Adrenal gland (tissue), 19 donors: ENCODE measurements at regions of chr11 and their contacts with region 1.

Region 1: DNA sequence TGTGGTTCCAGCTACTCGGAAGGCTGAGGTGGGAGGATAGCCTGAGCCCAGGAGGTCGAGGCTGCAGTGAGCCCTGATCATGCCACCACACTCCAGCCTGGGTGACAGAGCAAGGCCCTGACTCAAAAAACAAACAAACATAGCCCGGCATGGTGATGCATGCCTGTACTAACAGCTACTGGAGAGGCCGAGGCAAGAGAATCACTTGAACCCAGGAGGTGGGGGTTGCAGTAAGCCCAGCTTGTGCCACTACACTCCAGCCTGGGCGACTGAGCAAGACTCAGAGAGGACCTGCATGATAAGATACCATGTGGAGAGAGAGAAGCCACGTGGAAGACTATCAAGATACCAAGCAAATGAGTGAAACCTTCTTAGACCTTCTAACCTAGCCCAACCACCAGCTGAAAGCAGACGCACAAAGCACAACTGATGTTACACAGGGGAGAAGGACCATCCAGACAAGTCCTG is 36.1 kb downstream of the AMBRA1 start:
- DNase-seq: peak in 2 of 7 donors; percentile 11 to 24
- H3K4me3 ChIP-seq: no peak overlapping the region
- H3K27ac ChIP-seq: peak overlapping the region in 1 of 5 donors; percentile 23
- H3K4me1 ChIP-seq: peaks cover 39 to 65% of the 10 kb centered on the region in 2 donors
- H3K27me3 ChIP-seq: no peaks in the 10 kb centered on the region
- CTCF ChIP-seq: no peak
- POLR2A ChIP-seq: no peak

Region 2: DNA sequence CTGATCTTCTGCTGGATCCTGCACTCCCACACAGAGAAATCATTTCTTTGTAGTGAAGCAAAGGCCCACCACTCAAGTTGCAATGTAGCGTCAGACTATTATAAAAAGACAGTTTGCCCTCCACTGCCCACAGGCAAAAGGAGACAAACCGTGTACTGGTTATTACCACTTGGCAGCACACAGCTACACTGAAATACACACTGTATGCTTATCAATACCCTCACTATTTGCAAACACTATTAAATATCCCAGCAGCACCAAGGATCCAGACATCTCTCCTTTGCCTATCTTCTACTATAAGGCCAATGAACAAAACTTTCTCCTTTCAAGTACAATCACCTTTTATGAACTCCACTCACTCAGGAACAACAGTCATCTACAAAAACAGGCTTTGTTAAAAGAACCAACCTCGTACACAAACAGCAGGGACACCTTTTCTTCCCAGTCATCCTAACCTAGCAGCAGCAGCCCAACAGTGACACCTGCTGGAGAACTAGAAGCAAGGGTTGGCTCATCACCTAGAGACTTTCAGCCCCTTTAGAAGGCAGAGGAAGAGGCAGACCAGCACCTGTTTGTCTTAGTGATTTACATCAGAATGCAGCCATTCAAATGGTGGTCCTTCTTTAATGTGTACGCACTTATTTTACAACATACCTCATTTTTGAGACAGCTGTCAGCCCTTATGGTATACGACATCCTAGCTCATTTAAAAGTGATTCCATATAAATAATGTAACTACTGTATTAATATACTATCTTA is 20.0 kb before region 1 on chr11:
- intact Hi-C with region 1: loop called in 1 of 2 experiments (anchors 2 kb)
- DNase-seq: peak; percentile 65 to 82 (median 69)
- H3K4me3 ChIP-seq: no peak overlapping the region
- H3K27ac ChIP-seq: peak overlapping the region in 1 of 5 donors; percentile 18
- H3K4me1 ChIP-seq: peaks cover 16 to 38% of the 10 kb centered on the region in 2 donors
- H3K27me3 ChIP-seq: no peaks in the 10 kb centered on the region
- CTCF ChIP-seq: peak; percentile 81 to 91 (median 86)
- POLR2A ChIP-seq: no peak

Region 3: DNA sequence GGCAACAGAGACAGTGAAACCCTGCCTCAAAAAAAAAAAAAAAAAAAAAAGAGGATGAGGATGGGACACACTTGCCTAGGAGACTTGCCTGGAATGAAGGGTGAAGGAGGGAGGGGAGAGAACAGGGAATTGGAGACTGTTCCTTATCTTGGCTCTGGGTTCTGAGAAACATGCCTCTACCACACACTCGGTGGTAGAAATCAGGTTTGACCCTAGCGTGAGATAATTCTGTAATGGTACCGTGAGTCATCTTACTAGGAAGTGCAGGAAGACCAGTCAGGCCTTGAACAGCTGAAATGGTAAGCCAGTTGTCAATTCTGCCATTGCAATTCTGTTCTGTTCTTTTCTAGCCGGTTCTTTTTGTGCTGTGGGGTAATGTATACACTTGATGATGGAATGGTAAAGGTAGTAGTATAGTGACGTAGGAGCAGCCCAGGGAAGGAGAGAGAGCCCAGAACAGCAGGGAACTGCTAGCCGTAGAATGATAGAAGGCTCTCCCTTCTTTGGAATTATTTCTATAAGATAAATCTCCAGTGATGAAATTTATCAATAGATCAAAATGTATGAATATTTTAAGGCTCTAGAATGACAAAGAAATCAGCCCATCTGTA is 40.0 kb after region 1 on chr11:
- intact Hi-C with region 1: no loop called
- DNase-seq: peak in 3 of 7 donors; percentile 30 to 45 (median 44)
- H3K4me3 ChIP-seq: no peak overlapping the region
- H3K27ac ChIP-seq: peak overlapping the region; percentile 20 to 96 (median 77)
- H3K4me1 ChIP-seq: peaks cover 23 to 42% of the 10 kb centered on the region in 2 donors
- H3K27me3 ChIP-seq: no peaks in the 10 kb centered on the region
- CTCF ChIP-seq: no peak
- POLR2A ChIP-seq: no peak

Region 4: DNA sequence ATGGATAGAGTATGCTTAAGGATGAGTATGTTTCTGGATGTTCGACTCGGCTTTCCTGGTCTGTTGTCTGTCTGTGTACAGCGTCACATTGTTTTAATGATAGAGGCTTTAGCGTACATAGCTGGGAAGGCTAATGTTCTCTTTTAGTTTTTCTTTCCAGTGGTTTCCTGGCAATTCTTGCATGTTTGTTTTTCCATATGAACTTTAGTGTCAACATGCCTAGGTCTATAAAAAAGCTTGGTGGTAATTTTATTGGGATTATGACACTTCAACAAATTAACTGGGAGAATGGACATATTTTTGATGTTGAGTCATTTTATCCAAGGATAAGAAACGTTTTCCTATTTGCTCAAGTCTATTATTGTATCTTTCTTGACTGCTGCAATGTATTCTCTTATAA is 178.9 kb after region 1 on chr11:
- intact Hi-C with region 1: no loop called
- DNase-seq: no peak
- H3K4me3 ChIP-seq: no peak overlapping the region
- H3K27ac ChIP-seq: no peak overlapping the region
- H3K4me1 ChIP-seq: no peaks in the 10 kb centered on the region
- H3K27me3 ChIP-seq: no peaks in the 10 kb centered on the region
- CTCF ChIP-seq: no peak
- POLR2A ChIP-seq: no peak